Mammary epithelial cell (primary cell): ENCODE measurements at regions of chr1 and their contacts with region 1.

Region 1: DNA sequence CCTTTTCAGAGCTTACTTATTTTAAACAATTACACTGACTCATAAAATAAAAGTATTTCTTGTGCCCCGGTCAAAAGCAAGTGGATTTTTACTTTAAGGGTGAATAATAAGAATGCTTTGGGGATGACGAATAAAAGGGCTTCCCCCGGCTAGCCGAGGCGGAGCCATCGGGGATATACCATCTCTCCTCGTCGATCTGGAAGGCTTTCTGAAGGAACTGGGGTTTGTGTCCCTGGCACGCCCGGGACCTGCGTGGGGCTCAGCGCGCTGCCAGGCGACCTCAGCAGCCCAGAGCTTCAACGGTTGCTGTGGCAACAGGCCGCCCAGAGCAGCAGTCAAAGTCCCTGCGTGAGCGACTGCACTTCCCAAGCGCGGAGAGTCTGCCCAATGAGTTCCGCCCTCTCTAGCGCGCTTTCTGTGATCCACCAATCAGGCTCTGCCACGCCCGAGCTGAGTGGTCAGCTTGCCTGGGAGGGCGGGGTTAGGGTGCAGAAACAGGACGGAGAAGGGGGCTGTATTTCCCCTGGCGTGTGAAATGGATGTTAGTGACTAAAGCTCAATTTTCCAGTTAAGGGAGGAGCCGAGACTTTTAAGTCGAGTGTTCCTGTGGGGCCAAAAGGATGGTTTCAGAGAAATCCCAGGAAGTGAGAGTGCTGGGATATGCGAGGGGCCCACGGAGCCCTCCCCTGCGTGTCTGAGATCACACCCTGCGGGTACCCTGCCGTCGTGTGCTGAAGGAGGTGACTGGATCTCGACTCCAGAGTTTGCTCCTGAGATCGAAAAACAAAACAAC is 33.0 kb upstream of the MGST3 start:
- DNase-seq: peak; percentile 97
- H3K4me3 ChIP-seq: peak overlapping the region; percentile 46 to 76 (median 62)
- H3K27ac ChIP-seq: peak overlapping the region; percentile 72
- H3K4me1 ChIP-seq: peaks cover 13% of the 10 kb centered on the region
- H3K27me3 ChIP-seq: no peaks in the 10 kb centered on the region
- CTCF ChIP-seq: no peak

Region 2: GRCh38 chr1:165144757-165145397 is 453.2 kb before region 1 on chr1:
- CTCF ChIA-PET with region 1: no interaction called
- dilution Hi-C with region 1: no loop called
- in situ Hi-C with region 1: loop called in 1 of 2 experiments (anchors 25 kb)
- intact Hi-C with region 1: loop called (anchors 5 kb)
- DNase-seq: peak; percentile 48
- H3K4me3 ChIP-seq: no peak overlapping the region
- H3K27ac ChIP-seq: no peak overlapping the region
- H3K4me1 ChIP-seq: no peaks in the 10 kb centered on the region
- H3K27me3 ChIP-seq: no peaks in the 10 kb centered on the region
- CTCF ChIP-seq: peak; percentile 66 to 80

Region 3: DNA sequence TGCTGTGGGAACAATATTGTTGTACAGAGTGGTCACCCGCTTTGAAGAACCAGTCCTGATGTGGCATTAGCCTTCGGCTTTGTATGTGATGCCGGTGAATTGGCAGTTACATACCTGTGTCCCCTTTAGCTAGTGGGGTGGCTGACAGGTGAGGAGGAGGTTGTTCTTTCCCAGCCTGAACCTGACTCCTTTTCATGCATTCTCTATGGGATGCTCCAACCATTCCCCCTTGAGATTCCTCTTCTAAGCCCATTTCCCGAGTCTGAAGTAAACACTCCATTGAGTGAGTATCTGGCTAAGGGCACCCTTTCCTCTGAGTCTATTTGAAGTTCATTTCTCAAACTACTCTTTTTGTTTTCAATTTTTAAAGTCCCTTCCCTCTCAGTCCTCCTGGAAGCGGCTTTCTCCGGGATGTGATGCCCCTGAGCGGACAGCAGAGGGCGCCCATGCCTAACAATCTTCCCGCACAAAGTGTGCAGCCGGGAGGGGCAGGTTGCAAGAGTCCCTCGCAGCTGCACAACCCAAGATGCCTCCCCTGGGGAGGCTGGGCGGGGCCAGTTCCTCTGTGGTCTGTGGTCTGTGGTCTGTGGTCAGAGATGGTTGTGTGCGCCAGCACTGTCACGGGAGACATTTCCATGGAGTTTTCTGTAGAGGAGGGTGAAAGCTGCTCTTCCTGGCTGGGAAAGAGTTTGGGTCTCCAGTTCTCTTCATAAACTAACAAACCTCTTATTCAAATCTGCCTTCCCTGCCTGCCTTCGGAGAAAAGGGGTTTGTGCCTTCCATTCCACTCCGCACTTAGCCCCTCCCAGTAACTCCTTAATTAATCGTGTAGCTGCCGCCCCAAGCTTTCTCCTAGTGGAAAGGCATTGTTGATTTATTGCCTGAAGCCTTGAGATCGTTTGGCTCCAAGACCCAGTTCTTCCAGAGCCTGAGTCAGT is 205.2 kb before region 1 on chr1:
- CTCF ChIA-PET with region 1: interaction called, 3 read pairs
- dilution Hi-C with region 1: loop called (anchors 10 kb)
- in situ Hi-C with region 1: no loop called
- intact Hi-C with region 1: loop called (anchors 1 kb)
- DNase-seq: peak; percentile 87
- H3K4me3 ChIP-seq: no peak overlapping the region
- H3K27ac ChIP-seq: no peak overlapping the region
- H3K4me1 ChIP-seq: peaks cover 6% of the 10 kb centered on the region
- H3K27me3 ChIP-seq: peaks cover 41% of the 10 kb centered on the region
- CTCF ChIP-seq: peak; percentile 87 to 95

Region 4: GRCh38 chr1:165630629-165631341 is 32.7 kb after region 1 on chr1 and contains the start of gene MGST3:
- CTCF ChIA-PET with region 1: interaction called, 3 read pairs
- dilution Hi-C with region 1: no loop called
- in situ Hi-C with region 1: no loop called
- intact Hi-C with region 1: loop called (anchors 1 kb)
- DNase-seq: peak; percentile 94
- H3K4me3 ChIP-seq: peak within 1 kb of the TSS; percentile 56 to 83 (median 80)
- H3K27ac ChIP-seq: peak within 1 kb of the TSS; percentile 75
- H3K4me1 ChIP-seq: peaks cover 18% of the 10 kb centered on the region
- H3K27me3 ChIP-seq: no peaks in the 10 kb centered on the region
- CTCF ChIP-seq: no peak
- total RNA-seq, gene MGST3: 96.0 to 130 TPM

Region 5: DNA sequence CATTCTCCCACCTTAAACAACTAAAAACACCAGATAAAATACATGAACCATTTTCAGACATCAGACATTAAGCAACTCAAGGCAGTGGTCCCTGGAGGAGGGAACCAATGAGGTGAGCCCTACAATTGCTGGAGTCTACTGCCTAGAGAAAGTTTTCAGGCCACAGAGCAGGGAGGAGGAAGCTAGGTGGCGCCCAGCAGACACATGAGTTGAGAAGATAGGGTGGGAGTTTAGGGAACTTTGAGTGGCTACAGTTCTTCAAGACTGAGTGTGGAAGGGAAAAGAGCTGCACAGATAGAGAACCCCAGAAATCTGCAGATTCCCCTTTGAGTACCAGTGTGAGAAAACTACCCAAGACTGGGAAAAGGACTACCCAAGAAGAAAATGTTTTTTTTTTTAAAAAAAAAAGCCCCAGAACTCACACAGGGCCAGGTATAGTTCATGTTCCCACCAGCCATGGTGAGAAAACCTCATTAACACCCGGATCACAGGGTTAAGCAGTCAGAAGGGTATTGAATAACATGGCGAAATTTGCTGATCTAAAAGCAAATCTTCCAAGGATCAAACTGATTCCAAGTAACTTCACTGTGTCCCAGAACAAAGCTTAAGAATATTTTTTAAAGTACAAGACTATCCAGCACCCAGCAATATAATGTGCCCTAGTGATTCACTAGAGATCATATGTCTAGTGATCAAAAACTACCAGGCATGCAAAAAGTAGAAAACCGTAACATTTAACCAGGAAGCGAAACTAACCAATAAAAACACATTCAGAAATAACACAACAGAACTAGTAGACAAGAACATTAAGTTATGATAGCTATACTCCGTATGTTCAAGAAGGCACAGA is 88.3 kb after region 1 on chr1:
- CTCF ChIA-PET with region 1: no interaction called
- dilution Hi-C with region 1: no loop called
- in situ Hi-C with region 1: no loop called
- intact Hi-C with region 1: no loop called
- DNase-seq: no peak
- H3K4me3 ChIP-seq: no peak overlapping the region
- H3K27ac ChIP-seq: no peak overlapping the region
- H3K4me1 ChIP-seq: no peaks in the 10 kb centered on the region
- H3K27me3 ChIP-seq: no peaks in the 10 kb centered on the region
- CTCF ChIP-seq: peak in 1 of 2 donors; percentile 13

Region 6: GRCh38 chr1:165703648-165704047 is 105.6 kb after region 1 on chr1:
- CTCF ChIA-PET with region 1: no interaction called
- dilution Hi-C with region 1: no loop called
- in situ Hi-C with region 1: no loop called
- intact Hi-C with region 1: no loop called
- DNase-seq: no peak
- H3K4me3 ChIP-seq: no peak overlapping the region
- H3K27ac ChIP-seq: no peak overlapping the region
- H3K4me1 ChIP-seq: no peaks in the 10 kb centered on the region
- H3K27me3 ChIP-seq: no peaks in the 10 kb centered on the region
- CTCF ChIP-seq: no peak

Region 7: DNA sequence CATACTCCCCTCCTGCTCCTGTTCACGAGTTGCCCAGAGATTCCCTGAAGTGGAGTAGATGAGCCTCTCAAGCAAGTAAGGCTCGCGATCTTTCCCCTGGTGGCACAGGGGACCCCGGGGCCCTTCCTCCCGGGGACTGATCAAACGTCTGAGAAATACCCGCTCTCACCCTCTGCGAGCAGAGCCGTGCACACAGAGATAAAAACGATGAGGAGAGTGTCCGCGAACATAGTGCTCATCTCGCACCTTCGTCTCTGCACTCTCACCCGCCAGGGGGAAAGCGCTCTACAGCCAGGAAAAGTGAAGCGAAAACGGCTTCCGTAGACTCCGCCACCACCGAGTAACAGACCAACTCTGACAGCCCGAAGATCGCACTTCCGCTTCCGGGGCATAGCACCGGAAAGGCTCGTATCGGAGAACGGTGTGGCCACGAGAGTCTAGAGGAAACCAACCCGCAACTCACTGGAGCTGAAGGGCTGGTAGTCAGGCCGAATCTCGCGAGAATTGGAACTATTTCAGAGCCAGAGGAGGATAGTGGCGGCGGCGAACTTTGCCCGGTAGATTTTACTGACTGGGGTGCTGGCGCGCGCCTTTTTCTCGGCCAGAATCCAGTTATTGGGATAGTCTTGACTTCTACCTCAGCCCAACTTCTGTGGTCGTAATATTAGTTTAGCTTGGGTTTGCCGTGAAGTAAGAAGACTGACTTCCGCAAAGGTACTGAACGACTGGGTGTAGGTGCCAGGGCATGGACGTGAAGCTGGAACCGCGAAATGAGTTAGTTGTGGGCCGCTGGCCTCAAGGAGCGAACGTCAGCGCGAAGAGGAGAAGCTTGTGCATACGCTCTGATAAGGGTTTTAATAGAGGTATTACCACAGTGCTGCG is 170.7 kb after region 1 on chr1 and contains the start of gene TMCO1:
- CTCF ChIA-PET with region 1: no interaction called
- dilution Hi-C with region 1: no loop called
- in situ Hi-C with region 1: no loop called
- intact Hi-C with region 1: loop called (anchors 2 kb)
- DNase-seq: peak; percentile 97
- H3K4me3 ChIP-seq: peak within 1 kb of the TSS; percentile 66 to 87 (median 82)
- H3K27ac ChIP-seq: peak within 1 kb of the TSS; percentile 88
- H3K4me1 ChIP-seq: peaks cover 27% of the 10 kb centered on the region
- H3K27me3 ChIP-seq: no peaks in the 10 kb centered on the region
- CTCF ChIP-seq: peak in 1 of 2 donors; percentile 33
- total RNA-seq, gene TMCO1: 79.0 to 80.9 TPM

Region 8: GRCh38 chr1:165914136-165914798 is 316.2 kb after region 1 on chr1:
- CTCF ChIA-PET with region 1: interaction called, 5 read pairs
- dilution Hi-C with region 1: no loop called
- in situ Hi-C with region 1: loop called (anchors 10 kb)
- intact Hi-C with region 1: loop called (anchors 1 kb)
- DNase-seq: peak; percentile 62
- H3K4me3 ChIP-seq: no peak overlapping the region
- H3K27ac ChIP-seq: no peak overlapping the region
- H3K4me1 ChIP-seq: peaks cover 4% of the 10 kb centered on the region
- H3K27me3 ChIP-seq: no peaks in the 10 kb centered on the region
- CTCF ChIP-seq: peak; percentile 81 to 88